Posterior vena cava (tissue), 2 donors: ENCODE measurements at regions of chr4 and their contacts with region 1.

Region 1: DNA sequence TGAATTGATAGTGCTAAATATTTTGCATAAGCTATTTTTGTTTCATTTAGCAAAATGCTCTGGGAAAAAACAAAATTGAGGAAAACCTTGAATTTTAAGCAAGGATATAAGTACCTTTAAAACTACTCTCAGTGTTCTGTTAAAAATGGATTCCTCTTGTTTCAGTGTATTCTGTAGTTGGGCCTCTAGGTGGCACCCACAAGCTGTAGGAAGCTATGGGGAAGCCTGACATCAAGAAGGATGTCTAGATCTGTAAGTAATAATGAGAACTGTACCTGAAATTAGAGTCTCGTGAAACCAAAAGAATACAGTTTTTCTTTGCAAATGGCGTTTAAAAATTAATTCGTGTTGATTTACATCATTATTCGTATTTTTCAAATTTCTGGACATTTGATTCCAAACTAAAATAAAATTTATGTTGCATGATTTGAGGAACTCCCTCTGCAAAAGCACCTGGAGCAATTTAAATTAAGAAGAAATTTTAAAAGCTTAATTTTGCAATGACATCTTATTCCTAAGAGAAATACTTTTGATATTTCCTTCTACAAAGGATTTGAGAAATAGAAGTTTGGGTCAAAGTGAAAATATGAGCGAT is 51.2 kb downstream of the TMPRSS11E start:
- DNase-seq: no peak

Region 2: GRCh38 chr4:68581383-68582338 is 83.2 kb after region 1 on chr4:
- intact Hi-C with region 1: no loop called
- DNase-seq: no peak

Region 3: DNA sequence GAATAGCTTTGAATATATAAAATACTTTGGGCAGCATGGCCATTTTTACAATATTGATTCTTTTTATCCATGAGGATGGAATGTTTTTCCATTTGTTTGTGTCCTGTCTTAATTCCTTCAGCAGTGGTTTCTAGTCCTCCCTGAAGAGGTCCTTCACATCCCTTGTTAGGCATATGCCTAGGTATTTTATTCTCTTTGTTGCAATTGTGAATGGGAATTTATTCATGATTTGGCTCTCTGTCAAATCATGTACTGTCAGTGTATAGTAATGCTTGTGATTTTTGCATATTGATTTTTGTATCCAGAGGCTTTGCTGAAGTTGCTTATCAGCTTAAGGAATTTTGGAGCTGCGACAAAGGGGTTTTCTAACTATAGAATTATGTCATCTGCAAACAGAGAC is 153.4 kb after region 1 on chr4:
- intact Hi-C with region 1: loop called in 1 of 2 experiments (anchors 10 kb)
- DNase-seq: no peak

Region 4: GRCh38 chr4:69167300-69167699 is 668.8 kb after region 1 on chr4:
- intact Hi-C with region 1: loop called in 1 of 2 experiments (anchors 10 kb)
- DNase-seq: no peak